Mucosa of descending colon (tissue), 3 donors: ENCODE measurements at regions of chr16 and their contacts with region 1.

Region 1: GRCh38 chr16:19071811-19072777 is 4.7 kb downstream of the COQ7 start:
- DNase-seq: peak in 2 of 3 donors; percentile 75 to 84
- ATAC-seq: peak; percentile 22
- H3K4me3 ChIP-seq: no peak overlapping the region
- H3K4me1 ChIP-seq: peaks cover 8% of the 10 kb centered on the region
- CTCF ChIP-seq: peak; percentile 44

Region 2: DNA sequence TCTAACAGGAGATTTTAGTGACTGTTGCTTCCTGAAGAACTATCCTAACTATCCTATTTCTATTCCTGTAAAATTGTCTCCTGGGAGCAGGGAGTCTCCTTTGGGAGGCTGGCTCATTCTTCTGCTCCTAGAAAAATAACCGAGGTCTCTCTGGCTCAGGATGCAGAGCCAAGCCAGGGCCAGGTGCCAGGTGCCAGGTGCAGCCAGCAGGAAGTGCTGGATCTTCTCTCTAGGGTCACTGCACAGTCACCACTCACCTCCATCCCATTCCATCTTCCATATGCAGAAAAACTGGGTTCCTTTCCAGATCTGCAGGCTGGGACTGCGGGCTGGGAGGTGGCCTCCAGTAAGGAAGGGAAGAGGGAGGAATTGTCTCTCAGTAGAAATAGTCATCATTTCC is 92.2 kb before region 1 on chr16:
- intact Hi-C with region 1: loop called in 1 of 2 experiments (anchors 10 kb)
- DNase-seq: no peak
- ATAC-seq: no peak
- H3K4me3 ChIP-seq: no peak overlapping the region
- H3K4me1 ChIP-seq: peaks cover 7% of the 10 kb centered on the region
- CTCF ChIP-seq: no peak

Region 3: GRCh38 chr16:19348578-19349315 is 276.7 kb after region 1 on chr16:
- intact Hi-C with region 1: no loop called
- DNase-seq: no peak
- ATAC-seq: no peak
- H3K4me3 ChIP-seq: no peak overlapping the region
- H3K4me1 ChIP-seq: no peaks in the 10 kb centered on the region
- CTCF ChIP-seq: no peak